GM18951 (cell line): ENCODE measurements at regions of chr7 and their contacts with region 1.

Region 1: DNA sequence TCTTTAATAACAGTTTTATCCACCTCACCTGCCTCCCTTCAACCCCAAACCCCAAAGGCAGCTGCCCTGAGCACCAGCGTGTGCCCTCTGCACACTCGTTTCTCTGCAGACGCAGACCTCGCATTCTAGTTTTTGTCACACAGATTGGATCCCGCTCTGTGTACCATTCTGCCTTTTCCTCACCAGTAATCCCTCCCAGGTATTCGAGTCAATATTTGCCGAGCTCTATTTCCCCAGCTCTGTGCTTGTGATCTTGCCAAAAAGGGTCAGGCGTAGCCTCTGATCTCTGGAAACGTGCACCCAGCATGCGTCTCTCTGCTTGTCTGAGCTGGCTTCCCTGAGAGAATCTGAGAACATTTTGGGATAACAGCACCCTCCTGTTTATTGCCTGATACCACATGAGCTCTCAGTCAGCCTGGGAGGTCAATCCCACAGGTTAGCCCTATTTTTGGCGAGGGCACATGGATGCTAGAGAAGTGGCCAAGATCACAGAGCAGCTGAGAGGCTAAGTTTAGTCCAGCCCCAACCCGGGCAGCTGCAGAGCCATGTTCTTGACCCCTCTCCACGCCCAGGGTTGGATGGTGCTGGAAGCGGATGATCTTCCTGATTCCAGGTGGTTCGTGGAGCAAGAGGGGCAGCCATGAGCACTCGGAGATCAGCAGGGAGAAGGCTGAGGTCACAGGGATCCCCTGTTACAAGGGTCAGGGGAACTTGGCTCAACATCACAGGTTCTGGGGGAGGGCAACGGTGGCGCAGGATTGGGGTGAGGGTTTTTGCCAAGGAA is 29.1 kb downstream of the FOXL3 start:
- POLR2A ChIP-seq: no peak

Region 2: GRCh38 chr7:768881-769504 is 449.9 kb after region 1 on chr7:
- in situ Hi-C with region 1: loop called (anchors 10 kb)
- POLR2A ChIP-seq: no peak